H1 (cell line): ENCODE measurements at regions of chr19 and their contacts with region 1.

Region 1: GRCh38 chr19:29610563-29611271 is 4.6 kb downstream of the POP4 start:
- DNase-seq: peak; percentile 82 to 88
- H3K4me3 ChIP-seq: no peak overlapping the region
- H3K27ac ChIP-seq: no peak overlapping the region
- H3K4me1 ChIP-seq: no peaks in the 10 kb centered on the region; a peak in 2 of 7 replicates
- H3K27me3 ChIP-seq: no peaks in the 10 kb centered on the region
- CTCF ChIP-seq: peak; percentile 94 to 98 (median 95)
- EP300 ChIP-seq: no peak
- POLR2A ChIP-seq: no peak
- RAD21 ChIP-seq: peak; percentile 95 to 96

Region 2: GRCh38 chr19:29596885-29597525 is 13.7 kb before region 1 on chr19:
- CTCF ChIA-PET with region 1: interaction called, 14 read pairs
- POLR2A ChIA-PET with region 1: interaction called, 9 read pairs
- DNase-seq: no peak
- H3K4me3 ChIP-seq: no peak overlapping the region
- H3K27ac ChIP-seq: no peak overlapping the region
- H3K4me1 ChIP-seq: peaks cover 3 to 15% (median 13%) of the 10 kb centered on the region in 4 experiments; a peak in 6 of 7 replicates
- H3K27me3 ChIP-seq: peaks cover 0 to 2% (median 0%) of the 10 kb centered on the region in 4 experiments; a peak in 3 of 7 replicates
- CTCF ChIP-seq: peak; percentile 13 to 61 (median 58)
- EP300 ChIP-seq: no peak
- POLR2A ChIP-seq: no peak
- RAD21 ChIP-seq: peak; percentile 87

Region 3: GRCh38 chr19:29665215-29665825 is 54.6 kb after region 1 on chr19 and contains the start of gene PLEKHF1:
- CTCF ChIA-PET with region 1: interaction called, 79 read pairs
- POLR2A ChIA-PET with region 1: interaction called, 6 read pairs
- DNase-seq: peak in 1 of 2 experiments; percentile 96
- H3K4me3 ChIP-seq: peak within 1 kb of the TSS; percentile 34 to 97 (median 74)
- H3K27ac ChIP-seq: no peak within 1 kb of the TSS
- H3K4me1 ChIP-seq: peaks cover 0 to 21% (median 18%) of the 10 kb centered on the region in 4 experiments; a peak in 6 of 7 replicates
- H3K27me3 ChIP-seq: peaks cover 0 to 10% (median 1%) of the 10 kb centered on the region in 4 experiments; a peak in 4 of 7 replicates
- CTCF ChIP-seq: no peak
- EP300 ChIP-seq: no peak
- POLR2A ChIP-seq: peak in 1 of 2 experiments; percentile 23; a peak in 1 of 3 replicates
- RAD21 ChIP-seq: no peak
- total RNA-seq, gene PLEKHF1: 11.1 and 12.0 TPM in 2 replicates

Region 4: DNA sequence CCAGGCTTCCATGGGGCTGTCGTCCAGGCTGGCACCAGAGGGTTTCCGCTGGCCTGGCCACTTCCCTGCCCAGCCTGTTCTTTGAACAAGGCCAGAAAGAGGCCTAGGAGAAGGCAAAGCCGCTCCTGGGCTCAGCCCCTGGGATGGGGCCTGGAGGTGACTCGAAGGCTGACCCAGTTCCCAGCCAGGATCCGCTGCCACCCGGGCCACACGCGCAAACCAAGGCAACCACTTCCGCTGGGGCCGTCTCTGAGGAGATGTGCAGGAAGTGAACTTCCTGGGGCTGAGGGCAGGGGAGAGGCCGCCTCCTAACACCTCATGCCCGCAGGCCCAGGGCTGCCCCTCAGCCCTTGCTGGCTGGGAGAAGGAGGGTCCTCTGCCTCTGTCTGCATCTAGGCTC is 69.7 kb after region 1 on chr19:
- CTCF ChIA-PET with region 1: interaction called, 46 read pairs
- POLR2A ChIA-PET with region 1: interaction called, 9 read pairs
- DNase-seq: no peak
- H3K4me3 ChIP-seq: no peak overlapping the region
- H3K27ac ChIP-seq: no peak overlapping the region
- H3K4me1 ChIP-seq: peaks cover 0 to 4% (median 0%) of the 10 kb centered on the region in 4 experiments; a peak in 2 of 7 replicates
- H3K27me3 ChIP-seq: no peaks in the 10 kb centered on the region
- CTCF ChIP-seq: no peak
- EP300 ChIP-seq: no peak
- POLR2A ChIP-seq: no peak
- RAD21 ChIP-seq: no peak

Region 5: DNA sequence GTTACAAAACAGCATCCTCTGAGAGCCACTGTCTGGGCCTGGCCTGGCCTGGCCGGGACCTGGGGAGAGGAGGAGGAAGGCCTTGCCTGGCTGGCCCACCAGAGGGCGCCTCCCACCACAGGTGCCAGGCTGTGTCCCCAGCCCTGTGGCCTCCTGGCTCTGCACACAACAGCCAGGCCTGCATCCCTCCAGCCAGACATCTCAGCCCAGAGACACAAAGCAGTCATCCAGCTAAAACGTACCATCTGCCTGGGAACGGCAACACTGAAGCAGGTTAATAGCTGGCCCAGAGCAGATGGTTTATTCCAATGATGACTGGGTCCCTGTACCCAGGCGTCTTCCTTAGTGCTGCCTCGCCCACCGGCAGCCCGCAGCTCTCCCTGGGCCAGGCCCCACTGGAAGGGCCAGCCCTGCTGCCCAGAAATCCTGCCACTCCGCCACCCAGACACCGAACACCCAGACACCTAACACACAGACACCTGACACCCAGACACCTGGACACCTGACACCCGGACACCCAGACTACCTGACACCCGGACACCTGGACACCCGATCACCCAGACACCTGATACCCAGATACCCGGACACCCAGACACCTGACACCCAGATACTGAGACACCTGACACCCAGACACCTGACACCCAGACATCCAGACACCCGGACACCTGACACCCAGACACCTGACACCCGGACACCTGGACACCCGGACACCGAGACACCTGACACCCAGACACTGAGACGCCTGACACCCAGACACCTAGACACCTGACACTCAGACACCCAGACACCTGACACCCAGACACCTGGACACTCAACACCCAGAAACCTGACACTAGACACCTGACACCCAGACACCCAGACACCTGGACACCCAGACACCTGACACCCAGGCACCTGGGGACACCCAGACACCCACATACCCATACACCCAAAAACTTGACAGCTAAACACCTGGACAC is 84.2 kb after region 1 on chr19:
- CTCF ChIA-PET with region 1: interaction called, 67 read pairs
- POLR2A ChIA-PET with region 1: interaction called, 4 read pairs
- DNase-seq: peak; percentile 43 to 92
- H3K4me3 ChIP-seq: no peak overlapping the region
- H3K27ac ChIP-seq: no peak overlapping the region
- H3K4me1 ChIP-seq: peaks cover 0 to 4% (median 1%) of the 10 kb centered on the region in 4 experiments; a peak in 2 of 7 replicates
- H3K27me3 ChIP-seq: no peaks in the 10 kb centered on the region
- CTCF ChIP-seq: peak; percentile 94 to 97 (median 97)
- EP300 ChIP-seq: no peak
- POLR2A ChIP-seq: no peak
- RAD21 ChIP-seq: peak; percentile 86 to 94